GM12878 (cell line): ENCODE measurements at regions of chr14 and their contacts with region 1.

Region 1: GRCh38 chr14:62162998-62163589 is 400.9 kb downstream of the SNAPC1 start:
- DNase-seq: no peak
- ATAC-seq: peak; percentile 77
- H3K4me3 ChIP-seq: no peak overlapping the region
- H3K27ac ChIP-seq: no peak overlapping the region
- H3K4me1 ChIP-seq: no peaks in the 10 kb centered on the region
- H3K27me3 ChIP-seq: 0 out of 4 replicates have a peak, but pooled peaks cover 0 to 1% of the 10 kb centered on the region in 2 experiments
- CTCF ChIP-seq: peak; percentile 70 to 84 (median 79)
- EP300 ChIP-seq: no peak
- POLR2A ChIP-seq: no peak
- RAD21 ChIP-seq: peak; percentile 83

Region 2: DNA sequence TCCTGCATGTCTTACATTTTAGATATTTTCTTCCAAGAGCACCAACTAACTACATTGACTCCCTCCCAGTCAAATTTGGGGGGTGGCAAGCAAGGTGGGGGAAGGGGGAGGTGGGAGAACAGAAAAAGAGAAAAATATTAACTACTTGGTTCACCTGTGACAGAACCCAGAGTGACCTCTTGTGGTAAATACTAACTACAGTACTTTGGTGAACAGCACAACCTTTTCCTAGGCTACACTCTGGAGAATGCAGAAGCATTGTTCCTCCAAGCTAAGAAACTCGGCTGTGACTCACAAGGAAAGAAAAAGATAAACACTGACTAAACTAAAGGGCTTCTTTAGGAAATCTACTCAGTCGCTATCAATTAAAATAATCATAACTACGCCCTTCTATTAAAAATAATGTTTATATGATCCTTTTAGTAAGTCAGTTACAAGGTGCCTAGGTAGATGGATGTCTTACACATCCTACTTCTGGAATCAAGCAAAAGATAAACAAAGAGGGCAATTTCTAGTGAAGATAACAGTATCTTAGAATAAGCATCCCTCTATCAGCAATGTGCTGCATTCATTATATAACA is 876.8 kb after region 1 on chr14:
- CTCF ChIA-PET with region 1: no interaction called
- POLR2A ChIA-PET with region 1: no interaction called
- RAD21 ChIA-PET with region 1: no interaction called
- SMC1A ChIA-PET with region 1: no interaction called
- in situ Hi-C with region 1: loop called (anchors 10 kb)
- intact Hi-C with region 1: no loop called
- DNase-seq: no peak
- ATAC-seq: peak; percentile 50; the same call in 2 of the 3 replicates
- H3K4me3 ChIP-seq: no peak overlapping the region
- H3K27ac ChIP-seq: no peak overlapping the region
- H3K4me1 ChIP-seq: no peaks in the 10 kb centered on the region
- H3K27me3 ChIP-seq: peaks cover 0 to 3% of the 10 kb centered on the region in 2 experiments; a peak in 1 of 4 replicates
- CTCF ChIP-seq: peak; percentile 8 to 30 (median 17); a peak in 2 of 6 replicates
- EP300 ChIP-seq: no peak
- POLR2A ChIP-seq: no peak
- RAD21 ChIP-seq: peak; percentile 43

Region 3: GRCh38 chr14:63276492-63277342 is 1113.6 kb after region 1 on chr14:
- CTCF ChIA-PET with region 1: interaction called, 4 read pairs
- POLR2A ChIA-PET with region 1: no interaction called
- RAD21 ChIA-PET with region 1: no interaction called
- SMC1A ChIA-PET with region 1: interaction called, 3 read pairs
- in situ Hi-C with region 1: loop called (anchors 5 kb)
- intact Hi-C with region 1: loop called (anchors 1 kb)
- DNase-seq: no peak
- ATAC-seq: peak; percentile 78
- H3K4me3 ChIP-seq: no peak overlapping the region
- H3K27ac ChIP-seq: no peak overlapping the region
- H3K4me1 ChIP-seq: no peaks in the 10 kb centered on the region
- H3K27me3 ChIP-seq: peaks cover 0 to 3% of the 10 kb centered on the region in 2 experiments; a peak in 1 of 4 replicates
- CTCF ChIP-seq: peak; percentile 66 to 83 (median 74); a peak in 5 of 6 replicates
- EP300 ChIP-seq: no peak
- POLR2A ChIP-seq: no peak
- RAD21 ChIP-seq: peak; percentile 83

Region 4: DNA sequence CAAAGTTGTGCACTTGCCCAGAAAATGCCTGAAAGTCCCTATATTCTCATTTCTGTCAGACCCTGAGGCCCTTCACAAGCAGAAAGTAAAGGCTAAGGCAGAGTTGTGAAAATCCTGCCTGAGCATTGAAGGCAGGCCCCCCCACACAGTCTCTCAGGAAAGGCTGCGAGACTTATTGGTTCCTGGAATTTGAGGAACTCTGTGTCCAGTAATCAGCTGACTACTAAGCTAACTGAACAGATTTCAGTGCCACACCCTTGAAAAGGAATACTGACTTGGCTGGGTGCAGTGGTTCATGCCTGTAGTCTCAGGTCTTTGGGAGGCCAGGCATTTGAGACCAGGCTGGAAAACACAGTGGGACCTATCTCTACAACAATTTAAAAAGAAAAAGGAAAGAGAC is 1401.2 kb after region 1 on chr14:
- CTCF ChIA-PET with region 1: no interaction called
- POLR2A ChIA-PET with region 1: no interaction called
- RAD21 ChIA-PET with region 1: no interaction called
- SMC1A ChIA-PET with region 1: no interaction called
- in situ Hi-C with region 1: loop called (anchors 25 kb)
- intact Hi-C with region 1: no loop called
- DNase-seq: no peak
- ATAC-seq: no peak
- H3K4me3 ChIP-seq: no peak overlapping the region
- H3K27ac ChIP-seq: no peak overlapping the region
- H3K4me1 ChIP-seq: no peaks in the 10 kb centered on the region
- H3K27me3 ChIP-seq: no peaks in the 10 kb centered on the region
- CTCF ChIP-seq: no peak
- EP300 ChIP-seq: no peak
- POLR2A ChIP-seq: no peak
- RAD21 ChIP-seq: no peak

Region 5: DNA sequence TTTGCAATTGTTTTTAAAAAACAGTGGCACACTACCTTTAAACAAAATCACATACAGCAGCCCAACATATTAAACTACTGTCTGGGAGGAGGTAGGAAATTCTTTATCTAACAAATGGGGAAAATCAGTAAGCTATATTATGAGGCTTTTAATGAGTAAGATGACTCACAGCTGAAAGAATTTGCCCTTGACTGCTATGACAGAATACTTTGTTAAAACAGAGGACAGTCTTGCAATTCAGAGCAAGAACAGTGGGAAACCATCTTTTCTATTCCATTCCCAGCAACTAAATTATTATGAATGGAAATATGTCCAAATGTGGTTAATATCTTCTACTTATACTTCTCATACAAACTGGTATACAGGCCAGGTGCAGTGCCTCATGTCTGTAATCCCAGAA is 1613.9 kb after region 1 on chr14:
- CTCF ChIA-PET with region 1: no interaction called
- POLR2A ChIA-PET with region 1: no interaction called
- RAD21 ChIA-PET with region 1: no interaction called
- SMC1A ChIA-PET with region 1: no interaction called
- in situ Hi-C with region 1: loop called (anchors 25 kb)
- intact Hi-C with region 1: no loop called
- DNase-seq: no peak
- ATAC-seq: no peak
- H3K4me3 ChIP-seq: no peak overlapping the region
- H3K27ac ChIP-seq: no peak overlapping the region
- H3K4me1 ChIP-seq: peaks cover 9% of the 10 kb centered on the region
- H3K27me3 ChIP-seq: no peaks in the 10 kb centered on the region
- CTCF ChIP-seq: no peak
- EP300 ChIP-seq: no peak
- POLR2A ChIP-seq: no peak
- RAD21 ChIP-seq: no peak